ENCODE measurements at regions of chrX and their contacts with region 1.

Region 1: GRCh38 chrX:24395775-24396174 is 35.3 kb downstream of the SUPT20HL1 start:
- DNase-seq: no peak
- ATAC-seq: peak; percentile 81 to 84

Region 2: DNA sequence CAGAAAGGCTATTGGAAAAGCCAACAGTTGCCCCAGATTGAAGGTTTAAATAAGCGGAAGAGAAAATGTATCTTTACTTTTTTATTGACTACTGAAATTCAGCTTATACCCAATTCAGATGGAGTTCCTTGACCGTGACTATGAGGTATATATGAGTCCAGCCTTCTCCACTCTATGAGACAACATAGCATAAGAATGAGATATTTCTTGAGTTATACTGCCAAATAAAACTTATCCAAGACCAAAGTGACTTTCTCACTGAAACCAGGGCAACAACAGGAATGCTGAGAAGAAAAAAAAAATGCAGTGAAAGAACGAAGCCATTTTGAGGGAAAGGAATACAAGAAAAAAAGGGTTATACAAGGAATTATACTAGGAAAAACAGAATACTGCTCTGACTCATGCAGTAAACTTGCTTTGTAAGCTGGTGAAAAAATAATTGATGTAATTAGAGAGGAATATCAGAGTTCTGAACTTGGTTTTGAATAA is 53.0 kb after region 1 on chrX:
- intact Hi-C with region 1: no loop called
- DNase-seq: no peak
- ATAC-seq: no peak

Region 3: GRCh38 chrX:24498975-24499374 is 103.2 kb after region 1 on chrX:
- intact Hi-C with region 1: loop called in 1 of 2 experiments (anchors 1 kb)
- DNase-seq: no peak
- ATAC-seq: no peak

Region 4: GRCh38 chrX:24515447-24515846 is 119.7 kb after region 1 on chrX:
- intact Hi-C with region 1: no loop called
- DNase-seq: no peak
- ATAC-seq: no peak

Region 5: GRCh38 chrX:24561121-24561520 is 165.3 kb after region 1 on chrX:
- intact Hi-C with region 1: loop called in 1 of 2 experiments (anchors 10 kb)
- DNase-seq: no peak
- ATAC-seq: no peak

Measured in left cardiac atrium (tissue), 4 donors.